ENCODE measurements at regions of chr4 and their contacts with region 1.

Region 1: GRCh38 chr4:114302472-114302871 is 296.1 kb upstream of the UGT8 start:
- DNase-seq: no peak

Region 2: GRCh38 chr4:115054839-115055238 is 752.4 kb after region 1 on chr4:
- intact Hi-C with region 1: loop called in 1 of 2 experiments (anchors 5 kb)
- DNase-seq: no peak